GM12878 (cell line): ENCODE measurements at regions of chr6 and their contacts with region 1.

Region 1: GRCh38 chr6:2209226-2209809 is 36.1 kb downstream of the GMDS start:
- DNase-seq: peak; percentile 15
- ATAC-seq: peak; percentile 99
- H3K4me3 ChIP-seq: no peak overlapping the region
- H3K27ac ChIP-seq: no peak overlapping the region
- H3K4me1 ChIP-seq: no peaks in the 10 kb centered on the region
- H3K27me3 ChIP-seq: no peaks in the 10 kb centered on the region
- CTCF ChIP-seq: peak; percentile 63 to 89 (median 73)
- EP300 ChIP-seq: no peak
- POLR2A ChIP-seq: no peak
- RAD21 ChIP-seq: peak; percentile 66

Region 2: DNA sequence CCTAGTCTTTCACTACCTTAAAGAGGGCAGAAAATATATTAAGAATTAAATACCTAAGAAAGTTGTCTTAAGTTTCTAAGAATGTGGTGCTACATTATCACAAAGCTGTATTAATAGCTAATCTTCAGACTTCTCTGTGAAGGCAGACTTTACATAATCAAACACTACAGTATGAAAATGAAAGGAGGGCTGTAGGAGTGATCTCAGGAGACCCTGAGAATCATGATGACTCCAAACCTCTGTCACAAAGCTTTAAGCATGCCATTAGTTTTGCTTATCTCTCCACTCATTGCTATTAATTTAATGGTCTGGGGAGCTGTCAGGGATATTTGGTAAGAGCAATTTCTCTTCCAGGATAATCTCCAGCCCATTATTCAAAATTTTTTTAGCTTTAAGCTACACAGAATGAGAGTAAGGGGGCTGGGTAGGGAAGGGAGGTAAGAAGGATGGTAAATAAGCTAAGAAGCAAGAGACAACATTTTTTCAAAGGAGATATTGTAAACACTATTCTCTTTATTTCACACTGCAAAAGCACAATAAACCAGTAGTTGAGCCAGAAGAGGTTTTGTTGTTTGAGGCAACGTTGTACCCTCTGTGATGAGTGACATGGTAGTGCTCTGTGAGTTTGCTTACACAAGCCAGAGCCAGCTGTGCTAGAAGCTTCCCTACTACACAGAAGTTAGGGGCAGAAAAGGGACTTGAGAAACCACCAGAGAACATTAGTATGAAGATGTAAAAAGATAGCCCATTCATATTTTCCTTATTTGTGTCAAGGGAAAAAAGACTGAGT is 222.7 kb before region 1 on chr6:
- CTCF ChIA-PET with region 1: no interaction called
- POLR2A ChIA-PET with region 1: no interaction called
- RAD21 ChIA-PET with region 1: no interaction called
- SMC1A ChIA-PET with region 1: no interaction called
- in situ Hi-C with region 1: no loop called
- intact Hi-C with region 1: no loop called
- DNase-seq: no peak
- ATAC-seq: no peak
- H3K4me3 ChIP-seq: no peak overlapping the region
- H3K27ac ChIP-seq: no peak overlapping the region
- H3K4me1 ChIP-seq: no peaks in the 10 kb centered on the region
- H3K27me3 ChIP-seq: no peaks in the 10 kb centered on the region
- CTCF ChIP-seq: no peak
- EP300 ChIP-seq: no peak
- POLR2A ChIP-seq: no peak
- RAD21 ChIP-seq: no peak

Region 3: GRCh38 chr6:2081155-2082138 is 127.9 kb before region 1 on chr6:
- CTCF ChIA-PET with region 1: no interaction called
- POLR2A ChIA-PET with region 1: no interaction called
- RAD21 ChIA-PET with region 1: no interaction called
- SMC1A ChIA-PET with region 1: no interaction called
- in situ Hi-C with region 1: no loop called
- intact Hi-C with region 1: no loop called
- DNase-seq: peak; percentile 68
- ATAC-seq: peak; percentile 94
- H3K4me3 ChIP-seq: peak overlapping the region; percentile 17; the same call in 1 of the 2 replicates
- H3K27ac ChIP-seq: no peak overlapping the region
- H3K4me1 ChIP-seq: peaks cover 24% of the 10 kb centered on the region
- H3K27me3 ChIP-seq: no peaks in the 10 kb centered on the region
- CTCF ChIP-seq: no peak
- EP300 ChIP-seq: peak in 1 of 2 experiments; percentile 50; a peak in 1 of 4 replicates
- POLR2A ChIP-seq: no peak
- RAD21 ChIP-seq: no peak

Region 4: GRCh38 chr6:2221726-2222274 is 12.5 kb after region 1 on chr6:
- CTCF ChIA-PET with region 1: interaction called, 29 read pairs
- POLR2A ChIA-PET with region 1: no interaction called
- RAD21 ChIA-PET with region 1: interaction called, 8 read pairs
- SMC1A ChIA-PET with region 1: interaction called, 12 read pairs
- in situ Hi-C with region 1: no loop called
- intact Hi-C with region 1: no loop called
- DNase-seq: no peak
- ATAC-seq: peak; percentile 89
- H3K4me3 ChIP-seq: peak overlapping the region; percentile 77
- H3K27ac ChIP-seq: peak overlapping the region; percentile 97
- H3K4me1 ChIP-seq: peaks cover 14% of the 10 kb centered on the region
- H3K27me3 ChIP-seq: no peaks in the 10 kb centered on the region
- CTCF ChIP-seq: no peak
- EP300 ChIP-seq: no peak
- POLR2A ChIP-seq: no peak
- RAD21 ChIP-seq: no peak

Region 5: DNA sequence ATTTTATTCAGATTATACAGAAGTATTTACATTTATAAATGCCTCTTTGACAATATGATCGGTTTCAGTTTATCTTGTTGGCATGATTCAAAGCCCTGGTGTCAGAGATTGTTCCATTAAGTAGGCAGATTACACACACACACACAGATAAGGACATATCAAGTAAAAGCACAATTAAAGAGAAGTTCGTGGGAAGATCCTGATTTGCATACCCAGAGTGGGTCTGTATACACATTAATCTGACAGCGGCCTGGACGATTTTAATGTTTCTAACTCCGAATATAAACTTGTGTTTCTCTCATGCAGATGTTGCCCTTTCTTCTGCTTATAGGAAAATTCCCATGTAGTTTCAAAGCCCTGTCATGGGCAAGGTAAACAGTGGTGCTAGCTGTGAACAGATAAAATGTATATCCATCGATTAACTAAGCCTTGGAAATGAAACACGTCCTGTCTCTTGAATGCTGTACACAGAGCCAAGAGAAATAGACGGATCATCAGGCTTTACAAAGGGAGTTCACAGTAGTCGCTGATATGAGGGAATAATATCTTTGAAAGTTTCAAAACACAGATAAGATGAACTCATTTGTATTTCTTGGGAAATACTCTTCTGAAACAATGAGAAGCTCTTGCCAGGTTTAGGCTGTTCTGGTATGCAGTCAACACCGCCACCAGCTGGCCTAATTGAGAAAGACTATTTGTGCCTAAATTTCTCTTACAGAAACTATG is 144.3 kb after region 1 on chr6:
- CTCF ChIA-PET with region 1: interaction called, 177 read pairs
- POLR2A ChIA-PET with region 1: interaction called, 4 read pairs
- RAD21 ChIA-PET with region 1: interaction called, 74 read pairs
- SMC1A ChIA-PET with region 1: interaction called, 56 read pairs
- in situ Hi-C with region 1: loop called (anchors 5 kb)
- intact Hi-C with region 1: loop called (anchors 1 kb)
- DNase-seq: peak; percentile 8
- ATAC-seq: peak; percentile 73
- H3K4me3 ChIP-seq: no peak overlapping the region
- H3K27ac ChIP-seq: no peak overlapping the region
- H3K4me1 ChIP-seq: no peaks in the 10 kb centered on the region
- H3K27me3 ChIP-seq: no peaks in the 10 kb centered on the region
- CTCF ChIP-seq: peak; percentile 70 to 83 (median 78); a peak in 5 of 6 replicates
- EP300 ChIP-seq: no peak
- POLR2A ChIP-seq: no peak
- RAD21 ChIP-seq: peak; percentile 89

Region 6: DNA sequence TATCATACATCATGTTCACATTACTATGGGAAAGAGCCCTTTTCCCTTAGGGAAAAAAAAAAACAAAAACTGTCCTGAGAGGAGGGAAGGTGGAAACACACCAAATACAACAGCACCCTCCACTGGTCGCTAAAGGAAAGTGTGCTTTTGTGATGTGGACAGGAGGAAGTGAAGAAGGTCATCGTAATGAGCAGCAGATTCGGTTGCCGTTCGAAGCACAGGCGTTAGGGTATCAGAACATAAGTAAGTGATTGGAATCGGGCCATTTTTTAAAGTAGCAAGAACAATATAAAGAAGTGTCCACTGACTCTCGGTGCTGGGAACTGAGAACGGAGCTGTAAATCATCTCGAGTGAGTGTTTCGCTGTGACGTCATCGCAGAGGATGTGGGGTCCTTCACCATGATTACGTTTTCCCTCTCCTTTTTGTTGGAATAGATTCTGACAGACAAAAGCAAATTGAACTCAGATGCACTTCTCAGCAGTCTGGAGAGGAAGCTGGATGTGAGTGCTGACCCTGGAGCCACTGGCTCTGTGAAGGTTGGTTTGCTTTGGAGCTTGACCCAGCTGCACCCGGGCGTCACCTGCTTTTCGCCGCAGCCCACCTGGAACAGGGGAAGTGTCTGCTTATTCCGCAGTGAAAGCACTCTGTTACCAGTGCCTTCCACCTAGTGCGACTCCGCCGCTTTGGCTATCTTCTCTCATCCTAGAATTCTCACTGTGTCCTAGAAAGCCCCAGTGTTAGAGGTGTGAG is 239.7 kb after region 1 on chr6:
- CTCF ChIA-PET with region 1: interaction called, 11 read pairs
- POLR2A ChIA-PET with region 1: no interaction called
- RAD21 ChIA-PET with region 1: interaction called, 4 read pairs
- SMC1A ChIA-PET with region 1: interaction called, 4 read pairs
- in situ Hi-C with region 1: no loop called
- intact Hi-C with region 1: no loop called
- DNase-seq: no peak
- ATAC-seq: peak; percentile 47; the same call in 2 of the 3 replicates
- H3K4me3 ChIP-seq: no peak overlapping the region
- H3K27ac ChIP-seq: no peak overlapping the region
- H3K4me1 ChIP-seq: no peaks in the 10 kb centered on the region
- H3K27me3 ChIP-seq: no peaks in the 10 kb centered on the region; a peak in 2 of 4 replicates
- CTCF ChIP-seq: peak; percentile 54 to 69 (median 54); a peak in 5 of 6 replicates
- EP300 ChIP-seq: no peak
- POLR2A ChIP-seq: no peak
- RAD21 ChIP-seq: peak; percentile 68